Naive thymus-derived CD4-positive, alpha-beta T cell (primary cell): ENCODE measurements at regions of chr17 and their contacts with region 1.

Region 1: GRCh38 chr17:51764387-51764972 is 394.0 kb downstream of the CA10 start:
- DNase-seq: peak in 8 of 9 donors; percentile 8 to 49 (median 36)
- ATAC-seq: peak; percentile 83
- H3K4me3 ChIP-seq: no peak overlapping the region
- H3K4me3 Mint-ChIP-seq: no peak overlapping the region
- H3K27ac ChIP-seq: no peak overlapping the region
- H3K27ac Mint-ChIP-seq: no peak overlapping the region
- H3K4me1 ChIP-seq: no peaks in the 10 kb centered on the region
- H3K4me1 Mint-ChIP-seq: no peaks in the 10 kb centered on the region
- H3K27me3 ChIP-seq: no peaks in the 10 kb centered on the region
- H3K27me3 Mint-ChIP-seq: peaks cover 10 to 59% (median 35%) of the 10 kb centered on the region in 5 donors

Region 2: DNA sequence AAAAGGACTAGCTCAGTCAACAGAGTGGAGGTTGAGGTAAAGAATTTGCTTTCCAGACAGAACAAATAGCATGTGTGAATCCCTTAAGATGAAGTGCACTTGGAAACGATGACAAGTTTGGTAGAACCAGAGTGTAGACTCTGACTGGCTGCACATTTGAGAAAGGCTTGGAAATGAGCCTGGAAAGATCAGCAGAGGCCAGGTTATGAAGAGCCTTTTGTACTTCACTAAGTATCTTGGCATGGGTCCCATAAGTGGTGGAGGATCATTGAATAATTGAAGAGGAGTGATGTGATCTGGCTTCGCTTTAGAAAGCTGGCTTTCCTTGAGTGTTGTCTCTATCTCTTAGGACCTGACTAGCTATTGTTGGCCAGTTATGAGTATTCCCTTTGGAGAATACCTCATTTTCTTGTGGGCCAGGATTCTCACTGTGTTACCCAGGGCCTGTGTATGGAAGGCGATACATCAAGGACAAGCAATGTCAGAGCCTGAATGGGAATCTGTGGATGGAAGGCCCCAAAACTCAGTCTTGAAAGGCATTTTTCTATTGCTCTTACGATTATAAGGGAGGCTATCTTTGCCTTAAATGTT is 174.3 kb before region 1 on chr17:
- CTCF ChIA-PET with region 1: no interaction called
- POLR2A ChIA-PET with region 1: no interaction called
- intact Hi-C with region 1: no loop called
- DNase-seq: no peak
- ATAC-seq: no peak
- H3K4me3 ChIP-seq: no peak overlapping the region
- H3K4me3 Mint-ChIP-seq: no peak overlapping the region
- H3K27ac ChIP-seq: no peak overlapping the region
- H3K27ac Mint-ChIP-seq: no peak overlapping the region
- H3K4me1 ChIP-seq: no peaks in the 10 kb centered on the region
- H3K4me1 Mint-ChIP-seq: no peaks in the 10 kb centered on the region
- H3K27me3 ChIP-seq: no peaks in the 10 kb centered on the region
- H3K27me3 Mint-ChIP-seq: peaks cover 0 to 23% (median 10%) of the 10 kb centered on the region in 5 donors

Region 3: DNA sequence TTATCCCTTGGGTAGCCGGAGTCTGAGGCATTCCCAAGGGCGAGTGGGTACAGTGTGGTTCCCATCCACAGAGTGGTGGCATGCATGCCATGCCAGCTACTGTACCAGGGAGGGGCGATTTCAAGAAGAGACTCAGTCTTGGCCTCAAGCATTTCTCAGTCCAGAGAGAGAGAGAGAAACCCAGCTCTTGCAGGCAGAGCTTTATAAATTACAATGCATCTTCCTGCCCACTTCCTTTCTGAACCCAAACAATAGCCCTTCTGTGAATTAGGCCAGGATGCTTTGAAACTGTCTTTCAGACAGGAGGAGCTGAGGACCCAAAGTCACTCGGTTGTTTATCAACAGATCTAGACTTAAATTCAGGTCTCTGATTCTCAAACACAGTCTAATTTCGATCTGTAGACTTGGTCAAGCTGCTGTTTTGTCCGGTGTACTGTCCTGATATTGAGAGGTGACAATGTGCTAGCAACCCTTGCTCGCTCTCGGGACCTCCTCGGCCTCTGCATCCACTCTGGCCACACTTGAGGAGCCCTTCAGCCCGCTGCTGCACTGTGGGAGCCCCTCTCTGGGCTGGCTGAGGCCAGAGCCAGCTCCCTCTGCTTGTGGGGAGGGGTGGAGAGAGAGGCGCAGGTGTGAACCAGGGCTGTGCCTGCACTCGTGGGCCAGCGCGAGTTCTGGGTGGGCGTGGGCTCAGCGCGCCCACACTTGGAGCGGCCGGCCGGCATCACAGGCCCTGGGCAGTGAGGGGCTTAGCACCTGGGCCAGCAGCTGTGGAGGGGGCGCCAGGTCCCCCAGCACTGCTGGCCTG is 96.1 kb before region 1 on chr17:
- CTCF ChIA-PET with region 1: no interaction called
- POLR2A ChIA-PET with region 1: no interaction called
- intact Hi-C with region 1: no loop called
- DNase-seq: no peak
- ATAC-seq: no peak
- H3K4me3 ChIP-seq: no peak overlapping the region
- H3K4me3 Mint-ChIP-seq: no peak overlapping the region
- H3K27ac ChIP-seq: no peak overlapping the region
- H3K27ac Mint-ChIP-seq: no peak overlapping the region
- H3K4me1 ChIP-seq: no peaks in the 10 kb centered on the region
- H3K4me1 Mint-ChIP-seq: peaks cover 0 to 3% (median 0%) of the 10 kb centered on the region in 7 donors
- H3K27me3 ChIP-seq: no peaks in the 10 kb centered on the region
- H3K27me3 Mint-ChIP-seq: peaks cover 0 to 27% (median 12%) of the 10 kb centered on the region in 5 donors

Region 4: GRCh38 chr17:51869387-51869786 is 104.9 kb after region 1 on chr17:
- CTCF ChIA-PET with region 1: no interaction called
- POLR2A ChIA-PET with region 1: no interaction called
- intact Hi-C with region 1: no loop called
- DNase-seq: no peak
- ATAC-seq: no peak
- H3K4me3 ChIP-seq: no peak overlapping the region
- H3K4me3 Mint-ChIP-seq: no peak overlapping the region
- H3K27ac ChIP-seq: no peak overlapping the region
- H3K27ac Mint-ChIP-seq: no peak overlapping the region
- H3K4me1 ChIP-seq: no peaks in the 10 kb centered on the region
- H3K4me1 Mint-ChIP-seq: no peaks in the 10 kb centered on the region
- H3K27me3 ChIP-seq: no peaks in the 10 kb centered on the region
- H3K27me3 Mint-ChIP-seq: peaks cover 0 to 7% (median 3%) of the 10 kb centered on the region in 5 donors

Region 5: GRCh38 chr17:52106638-52107261 is 342.3 kb after region 1 on chr17:
- CTCF ChIA-PET with region 1: no interaction called
- POLR2A ChIA-PET with region 1: no interaction called
- intact Hi-C with region 1: loop called in 1 of 2 experiments (anchors 1 kb)
- DNase-seq: peak in 5 of 9 donors; percentile 1 to 31 (median 22)
- ATAC-seq: no peak
- H3K4me3 ChIP-seq: no peak overlapping the region
- H3K4me3 Mint-ChIP-seq: no peak overlapping the region
- H3K27ac ChIP-seq: no peak overlapping the region
- H3K27ac Mint-ChIP-seq: no peak overlapping the region
- H3K4me1 ChIP-seq: no peaks in the 10 kb centered on the region
- H3K4me1 Mint-ChIP-seq: no peaks in the 10 kb centered on the region
- H3K27me3 ChIP-seq: no peaks in the 10 kb centered on the region
- H3K27me3 Mint-ChIP-seq: peaks cover 0 to 34% (median 17%) of the 10 kb centered on the region in 5 donors

Region 6: DNA sequence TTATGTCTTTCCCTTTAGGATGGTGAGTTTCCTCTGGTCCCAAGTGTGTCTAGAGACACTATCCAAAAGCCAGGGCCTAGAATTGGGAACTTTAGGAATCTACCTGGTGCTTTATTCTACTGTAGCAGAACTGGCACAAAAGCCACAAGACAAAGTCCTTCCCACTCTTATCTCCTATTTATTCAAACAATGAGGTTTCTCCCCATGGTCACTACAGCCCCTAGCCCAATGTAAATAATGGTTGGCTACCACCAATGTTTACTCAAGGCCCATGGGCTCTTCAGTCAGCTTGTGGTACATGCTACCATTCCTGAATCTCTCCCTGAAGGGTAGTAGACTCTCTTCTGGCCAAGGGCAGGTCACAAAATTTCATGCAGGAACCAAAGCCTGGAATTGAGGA is 1268.8 kb after region 1 on chr17:
- CTCF ChIA-PET with region 1: no interaction called
- POLR2A ChIA-PET with region 1: no interaction called
- intact Hi-C with region 1: no loop called
- DNase-seq: no peak
- ATAC-seq: no peak
- H3K4me3 ChIP-seq: no peak overlapping the region
- H3K4me3 Mint-ChIP-seq: no peak overlapping the region
- H3K27ac ChIP-seq: no peak overlapping the region
- H3K27ac Mint-ChIP-seq: no peak overlapping the region
- H3K4me1 ChIP-seq: no peaks in the 10 kb centered on the region
- H3K4me1 Mint-ChIP-seq: no peaks in the 10 kb centered on the region
- H3K27me3 ChIP-seq: no peaks in the 10 kb centered on the region
- H3K27me3 Mint-ChIP-seq: no peaks in the 10 kb centered on the region